ENCODE measurements at regions of chr7 and their contacts with region 1.

Region 1: DNA sequence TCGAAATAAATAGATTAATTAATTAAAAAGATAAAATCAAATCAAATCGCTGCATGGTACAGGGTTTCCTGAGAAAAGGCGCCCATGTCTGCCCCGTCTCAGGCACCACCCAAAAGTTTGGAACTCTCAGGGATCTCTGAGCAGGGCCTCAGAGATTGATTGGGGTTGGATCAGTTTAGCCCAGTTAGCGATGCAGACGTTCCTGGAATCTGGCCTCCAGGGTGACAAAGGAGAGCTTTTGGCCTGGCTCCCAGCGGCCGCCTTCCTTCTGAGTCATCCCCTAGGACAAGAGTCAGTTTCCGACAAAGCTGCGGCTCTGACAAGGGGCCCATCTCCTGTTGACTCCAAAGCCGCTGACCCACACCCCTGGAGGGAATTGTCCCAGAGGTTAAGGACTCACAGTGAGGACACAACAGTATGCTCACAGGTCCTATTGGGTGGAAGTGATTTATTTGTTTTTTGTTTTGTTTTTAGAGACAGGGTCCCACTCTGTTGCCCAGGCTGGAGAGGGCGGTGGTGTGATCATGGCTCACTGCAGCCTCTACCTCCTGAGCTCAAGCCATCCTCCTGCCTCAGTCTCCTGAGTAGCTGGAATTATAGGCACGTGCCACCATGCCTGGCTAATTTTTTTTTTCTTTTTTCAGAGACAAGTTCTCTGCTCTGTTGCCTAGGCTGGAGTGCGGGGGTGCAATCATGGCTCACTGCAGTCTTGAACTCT is 6.9 kb downstream of the ORAI2 start:
- DNase-seq: peak; percentile 93
- H3K4me3 ChIP-seq: no peak overlapping the region
- H3K27ac ChIP-seq: peak overlapping the region; percentile 70
- H3K4me1 ChIP-seq: peaks cover 13% of the 10 kb centered on the region
- H3K27me3 ChIP-seq: no peaks in the 10 kb centered on the region
- CTCF ChIP-seq: no peak
- POLR2A ChIP-seq: no peak

Region 2: GRCh38 chr7:102424787-102425218 is 15.4 kb before region 1 on chr7:
- CTCF ChIA-PET with region 1: no interaction called
- POLR2A ChIA-PET with region 1: no interaction called
- dilution Hi-C with region 1: no loop called
- intact Hi-C with region 1: no loop called
- DNase-seq: no peak
- H3K4me3 ChIP-seq: no peak overlapping the region
- H3K27ac ChIP-seq: no peak overlapping the region
- H3K4me1 ChIP-seq: no peaks in the 10 kb centered on the region
- H3K27me3 ChIP-seq: no peaks in the 10 kb centered on the region
- CTCF ChIP-seq: no peak
- POLR2A ChIP-seq: no peak

Region 3: DNA sequence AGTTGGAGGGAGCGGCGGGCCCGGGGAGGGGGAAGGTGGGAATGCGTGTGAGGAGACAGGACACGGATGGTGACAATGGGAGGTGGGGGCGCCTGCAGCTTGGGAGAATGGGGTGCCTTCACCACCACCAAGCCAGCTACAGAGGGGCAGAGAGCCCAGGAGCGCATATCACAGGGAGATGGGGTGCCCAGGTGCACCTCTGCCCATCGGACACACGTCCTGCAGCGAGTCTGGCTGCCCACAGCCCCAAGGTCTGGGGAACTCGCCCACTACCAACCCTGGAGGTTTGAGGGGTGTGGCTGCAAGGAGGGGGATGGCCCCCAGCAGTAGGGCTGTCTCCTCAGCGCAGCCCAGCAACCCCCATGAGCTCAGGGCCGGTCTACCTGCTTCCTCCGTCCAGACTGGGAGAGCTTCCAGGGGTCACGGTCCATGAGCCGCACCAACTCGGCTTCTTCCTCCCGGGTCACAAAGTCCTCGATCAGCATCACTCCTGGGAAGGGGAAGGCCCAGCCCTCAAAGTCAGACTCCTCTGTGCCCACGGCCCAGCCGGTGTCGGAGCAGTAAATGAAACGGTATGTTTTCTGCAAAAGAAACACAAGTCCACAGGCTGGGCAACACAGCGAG is 19.1 kb after region 1 on chr7:
- CTCF ChIA-PET with region 1: interaction called, 4 read pairs
- POLR2A ChIA-PET with region 1: interaction called, 11 read pairs
- dilution Hi-C with region 1: no loop called
- intact Hi-C with region 1: no loop called
- DNase-seq: no peak
- H3K4me3 ChIP-seq: no peak overlapping the region
- H3K27ac ChIP-seq: no peak overlapping the region
- H3K4me1 ChIP-seq: peaks cover 4% of the 10 kb centered on the region
- H3K27me3 ChIP-seq: no peaks in the 10 kb centered on the region
- CTCF ChIP-seq: no peak
- POLR2A ChIP-seq: no peak

Region 4: GRCh38 chr7:104096683-104097082 is 1656.4 kb after region 1 on chr7:
- CTCF ChIA-PET with region 1: no interaction called
- POLR2A ChIA-PET with region 1: no interaction called
- dilution Hi-C with region 1: no loop called
- intact Hi-C with region 1: no loop called
- DNase-seq: peak; percentile 11
- H3K4me3 ChIP-seq: no peak overlapping the region
- H3K27ac ChIP-seq: no peak overlapping the region
- H3K4me1 ChIP-seq: no peaks in the 10 kb centered on the region
- H3K27me3 ChIP-seq: peaks cover 0 to 2% of the 10 kb centered on the region in 2 experiments
- CTCF ChIP-seq: peak in 1 of 2 donors; percentile 6
- POLR2A ChIP-seq: no peak

Measured in endothelial cell of umbilical vein (primary cell).